ENCODE measurements at regions of chr3 and their contacts with region 1.

Region 1: GRCh38 chr3:66407611-66408218 is 93.1 kb downstream of the LRIG1 start:
- DNase-seq: peak; percentile 78
- ATAC-seq: peak; percentile 88
- H3K4me3 Mint-ChIP-seq: no peak overlapping the region
- H3K27ac Mint-ChIP-seq: peak overlapping the region; percentile 28
- H3K4me1 Mint-ChIP-seq: peaks cover 12% of the 10 kb centered on the region
- H3K27me3 Mint-ChIP-seq: no peaks in the 10 kb centered on the region

Region 2: DNA sequence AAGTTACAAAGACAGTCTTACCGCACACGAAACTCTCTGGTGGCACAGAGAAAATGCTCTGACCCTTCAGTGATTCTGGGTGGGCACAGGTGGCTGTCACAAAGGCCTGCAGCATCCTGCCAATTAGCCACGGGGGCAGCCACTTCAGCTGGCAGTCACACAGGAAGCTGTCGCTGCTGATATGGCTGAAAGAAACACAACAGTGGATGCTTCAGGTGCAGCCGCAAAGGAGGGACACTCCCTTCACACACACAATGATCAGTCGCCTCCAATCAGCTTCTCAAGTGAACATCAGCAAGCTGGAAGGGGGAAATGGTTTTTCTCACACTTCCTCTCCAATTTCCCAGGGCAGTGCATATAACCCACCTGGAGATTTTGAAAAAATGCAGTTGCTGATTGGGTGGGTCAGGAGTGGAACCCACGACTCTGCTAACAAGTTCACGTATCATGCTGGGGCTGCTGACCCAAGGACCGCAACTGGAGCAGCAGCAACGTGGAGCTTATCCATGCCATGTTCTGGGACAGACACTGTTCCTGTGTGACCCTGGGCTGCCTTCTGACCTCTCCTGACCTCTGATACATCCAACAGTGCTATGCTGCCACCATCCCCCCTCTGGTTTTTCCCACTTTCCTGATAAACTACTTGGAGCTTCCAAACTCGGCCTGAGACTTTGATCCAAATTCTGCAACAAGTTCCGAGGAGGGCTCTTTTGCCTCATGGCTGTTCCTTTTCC is 13.5 kb before region 1 on chr3:
- CTCF ChIA-PET with region 1: interaction called, 10 read pairs
- DNase-seq: peak; percentile 73
- ATAC-seq: peak; percentile 88
- H3K4me3 Mint-ChIP-seq: peak overlapping the region; percentile 11
- H3K27ac Mint-ChIP-seq: peak overlapping the region; percentile 90
- H3K4me1 Mint-ChIP-seq: peaks cover 23% of the 10 kb centered on the region
- H3K27me3 Mint-ChIP-seq: no peaks in the 10 kb centered on the region

Region 3: GRCh38 chr3:66490214-66490613 is 82.5 kb after region 1 on chr3:
- CTCF ChIA-PET with region 1: interaction called, 15 read pairs
- DNase-seq: peak; percentile 59
- ATAC-seq: peak; percentile 63
- H3K4me3 Mint-ChIP-seq: peak overlapping the region; percentile 61
- H3K27ac Mint-ChIP-seq: peak overlapping the region; percentile 85
- H3K4me1 Mint-ChIP-seq: peaks cover 85% of the 10 kb centered on the region
- H3K27me3 Mint-ChIP-seq: no peaks in the 10 kb centered on the region

Region 4: GRCh38 chr3:66555214-66555844 is 147.6 kb after region 1 on chr3:
- CTCF ChIA-PET with region 1: no interaction called
- DNase-seq: no peak
- ATAC-seq: no peak
- H3K4me3 Mint-ChIP-seq: no peak overlapping the region
- H3K27ac Mint-ChIP-seq: no peak overlapping the region
- H3K4me1 Mint-ChIP-seq: peaks cover 8% of the 10 kb centered on the region
- H3K27me3 Mint-ChIP-seq: no peaks in the 10 kb centered on the region

Region 5: DNA sequence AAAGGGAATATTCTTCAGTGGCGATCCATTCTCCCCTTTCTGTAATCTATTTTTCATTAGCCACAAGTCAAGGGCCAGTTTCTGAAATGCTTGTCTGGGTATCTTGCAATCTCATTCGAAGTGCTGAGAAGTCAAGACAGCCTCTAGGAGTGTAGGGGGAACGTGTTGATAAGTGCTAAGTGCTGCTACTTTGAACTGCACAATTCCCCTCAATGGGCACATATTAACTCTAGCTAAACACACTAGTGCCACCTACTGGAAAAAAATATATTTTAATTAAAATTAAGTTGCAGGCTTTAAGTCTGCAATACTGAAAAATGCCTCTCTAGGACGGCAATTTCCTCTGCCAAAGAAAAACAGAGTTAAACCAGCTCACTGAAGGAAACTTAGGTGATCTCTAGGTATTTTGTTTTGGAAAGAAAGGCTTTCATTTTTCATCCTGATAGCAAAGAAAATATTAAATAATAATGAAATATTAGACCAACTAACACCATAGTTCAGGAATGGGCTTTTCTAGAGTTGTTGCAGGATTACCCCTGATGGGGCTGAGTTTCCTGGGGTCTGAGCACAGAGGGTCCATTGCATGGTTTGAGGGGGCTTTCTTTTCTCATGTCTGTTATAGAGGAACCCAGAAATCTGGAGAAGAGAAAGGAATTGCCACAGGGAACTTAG is 408.5 kb after region 1 on chr3:
- CTCF ChIA-PET with region 1: interaction called, 12 read pairs
- DNase-seq: no peak
- ATAC-seq: peak; percentile 65
- H3K4me3 Mint-ChIP-seq: no peak overlapping the region
- H3K27ac Mint-ChIP-seq: no peak overlapping the region
- H3K4me1 Mint-ChIP-seq: no peaks in the 10 kb centered on the region
- H3K27me3 Mint-ChIP-seq: peaks cover 14% of the 10 kb centered on the region

Measured in activated CD8-positive, alpha-beta memory T cell treated with anti-CD3 and anti-CD28 coated beads, Interleukin-2, amount 10 ng/mL, durations not matched to agents 7 days and 5 days (primary cell).